ENCODE measurements at regions of chr10 and their contacts with region 1.

Region 1: DNA sequence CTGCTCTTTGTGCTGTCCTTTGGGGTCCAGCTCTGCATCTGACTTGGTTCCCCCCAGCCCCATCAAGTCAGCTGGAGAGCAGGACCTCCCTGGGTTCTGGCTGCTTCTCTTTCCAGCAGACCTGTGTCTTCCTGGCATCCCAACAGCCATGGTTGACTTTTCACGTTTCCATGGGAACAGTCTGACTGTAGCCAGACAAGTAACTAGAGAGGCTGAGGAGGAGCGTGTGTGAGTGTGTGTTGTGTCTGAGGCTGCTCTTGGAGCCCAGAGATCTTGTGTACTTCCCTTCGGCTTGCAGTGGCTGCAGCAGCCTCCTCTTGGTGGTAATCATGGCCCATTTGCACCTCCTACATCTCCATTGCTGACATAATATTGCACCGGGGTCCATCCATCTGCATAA is 332.0 kb downstream of the RPS24 start:
- DNase-seq: no peak
- H3K4me3 ChIP-seq: no peak overlapping the region
- H3K27ac ChIP-seq: no peak overlapping the region
- H3K4me1 ChIP-seq: peaks cover 9% of the 10 kb centered on the region
- H3K27me3 ChIP-seq: no peaks in the 10 kb centered on the region
- CTCF ChIP-seq: no peak

Region 2: DNA sequence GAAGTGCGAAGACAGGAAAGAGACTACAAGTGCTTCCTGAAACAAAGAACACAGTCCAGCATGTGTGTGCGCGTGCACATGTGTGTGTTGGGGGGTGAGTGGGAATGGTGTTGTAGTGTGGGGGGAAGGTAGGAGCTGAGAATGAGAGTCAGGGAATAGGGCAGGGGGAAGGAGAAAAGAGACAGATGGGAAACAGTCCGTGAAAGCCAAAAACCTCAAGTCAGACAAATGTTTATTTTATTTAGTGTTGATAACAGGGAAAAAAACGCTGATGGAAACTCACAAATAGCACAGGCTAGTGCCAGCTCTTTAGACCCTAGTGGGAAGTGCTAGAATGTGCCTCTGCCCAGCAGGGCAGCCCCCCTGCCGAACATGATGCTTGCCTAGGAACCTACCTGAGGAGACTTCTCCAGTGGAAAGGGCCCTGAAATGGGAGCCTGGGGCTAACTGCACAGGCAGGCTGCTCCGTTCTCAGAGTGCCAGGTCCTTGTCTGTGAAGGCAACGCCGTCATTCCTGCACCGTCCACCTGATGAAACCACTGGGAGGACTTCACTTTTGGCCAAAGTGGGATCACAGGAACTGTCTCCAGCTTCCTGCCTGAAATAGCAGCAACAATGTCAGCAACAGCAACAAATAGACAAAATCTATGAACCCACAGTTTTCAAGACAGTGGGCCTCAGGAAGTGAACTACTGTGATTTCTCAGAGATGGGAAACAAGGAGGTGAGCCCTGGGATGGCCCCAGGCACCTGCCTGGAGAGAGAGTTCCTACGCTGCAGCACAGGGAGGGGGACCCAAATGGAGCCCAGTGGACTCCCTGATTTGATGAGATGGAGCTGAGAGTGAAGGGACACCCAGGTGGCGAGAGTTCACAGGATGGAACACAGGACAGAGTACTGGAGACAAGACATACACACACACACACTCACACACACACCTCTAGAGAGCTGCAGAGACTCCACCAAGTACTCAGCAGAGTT is 47.7 kb after region 1 on chr10:
- CTCF ChIA-PET with region 1: no interaction called
- dilution Hi-C with region 1: loop called (anchors 5 kb)
- in situ Hi-C with region 1: no loop called
- intact Hi-C with region 1: no loop called
- DNase-seq: no peak
- H3K4me3 ChIP-seq: no peak overlapping the region
- H3K27ac ChIP-seq: no peak overlapping the region
- H3K4me1 ChIP-seq: peaks cover 5% of the 10 kb centered on the region
- H3K27me3 ChIP-seq: no peaks in the 10 kb centered on the region
- CTCF ChIP-seq: no peak